Activated CD8-positive, alpha-beta T cell treated with anti-CD3 and anti-CD28 coated beads for 36 hours (primary cell): ENCODE measurements at regions of chr6 and their contacts with region 1.

Region 1: DNA sequence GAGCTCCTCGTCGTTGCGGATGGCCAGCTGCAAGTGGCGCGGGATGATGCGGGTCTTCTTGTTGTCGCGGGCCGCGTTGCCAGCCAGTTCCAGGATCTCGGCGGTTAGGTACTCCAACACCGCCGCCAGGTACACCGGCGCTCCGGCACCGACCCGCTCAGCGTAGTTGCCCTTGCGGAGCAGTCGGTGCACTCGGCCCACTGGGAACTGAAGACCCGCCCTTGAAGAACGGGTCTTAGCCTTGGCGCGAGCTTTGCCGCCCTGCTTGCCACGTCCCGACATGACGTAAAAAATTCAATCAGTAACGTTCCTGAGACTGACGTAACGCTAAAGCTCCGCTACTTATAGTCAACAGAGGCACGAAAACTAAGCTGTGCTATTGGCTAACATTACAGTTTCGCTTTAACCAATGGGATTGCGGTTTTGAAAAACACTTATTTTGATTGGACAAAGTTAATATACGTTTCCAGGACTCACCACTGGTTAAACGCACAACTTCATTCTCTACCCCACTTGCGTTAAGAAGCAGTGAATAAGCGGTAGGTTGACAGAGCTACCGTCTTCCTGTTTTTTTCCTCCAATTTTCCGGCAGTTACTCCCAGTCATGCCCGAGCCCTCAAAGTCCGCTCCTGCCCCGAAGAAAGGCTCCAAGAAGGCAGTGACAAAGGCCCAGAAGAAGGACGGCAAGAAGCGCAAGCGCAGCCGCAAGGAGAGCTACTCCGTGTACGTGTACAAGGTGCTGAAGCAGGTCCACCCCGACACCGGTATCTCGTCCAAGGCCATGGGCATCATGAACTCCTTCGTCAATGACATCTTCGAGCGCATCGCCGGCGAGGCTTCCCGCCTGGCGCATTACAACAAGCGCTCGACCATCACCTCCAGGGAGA is 73.9 kb downstream of the OR2B2 start:
- DNase-seq: peak; percentile 87
- ATAC-seq: peak; percentile 73
- H3K4me3 Mint-ChIP-seq: no peak overlapping the region
- H3K27ac Mint-ChIP-seq: no peak overlapping the region
- H3K4me1 Mint-ChIP-seq: peaks cover 20% of the 10 kb centered on the region
- H3K27me3 Mint-ChIP-seq: no peaks in the 10 kb centered on the region
- CTCF ChIP-seq: no peak

Region 2: GRCh38 chr6:27742833-27743573 is 95.3 kb before region 1 on chr6:
- CTCF ChIA-PET with region 1: no interaction called
- POLR2A ChIA-PET with region 1: no interaction called
- intact Hi-C with region 1: no loop called
- DNase-seq: no peak
- ATAC-seq: no peak
- H3K4me3 Mint-ChIP-seq: no peak overlapping the region
- H3K27ac Mint-ChIP-seq: no peak overlapping the region
- H3K4me1 Mint-ChIP-seq: peaks cover 7% of the 10 kb centered on the region
- H3K27me3 Mint-ChIP-seq: peaks cover 23% of the 10 kb centered on the region
- CTCF ChIP-seq: no peak

Region 3: DNA sequence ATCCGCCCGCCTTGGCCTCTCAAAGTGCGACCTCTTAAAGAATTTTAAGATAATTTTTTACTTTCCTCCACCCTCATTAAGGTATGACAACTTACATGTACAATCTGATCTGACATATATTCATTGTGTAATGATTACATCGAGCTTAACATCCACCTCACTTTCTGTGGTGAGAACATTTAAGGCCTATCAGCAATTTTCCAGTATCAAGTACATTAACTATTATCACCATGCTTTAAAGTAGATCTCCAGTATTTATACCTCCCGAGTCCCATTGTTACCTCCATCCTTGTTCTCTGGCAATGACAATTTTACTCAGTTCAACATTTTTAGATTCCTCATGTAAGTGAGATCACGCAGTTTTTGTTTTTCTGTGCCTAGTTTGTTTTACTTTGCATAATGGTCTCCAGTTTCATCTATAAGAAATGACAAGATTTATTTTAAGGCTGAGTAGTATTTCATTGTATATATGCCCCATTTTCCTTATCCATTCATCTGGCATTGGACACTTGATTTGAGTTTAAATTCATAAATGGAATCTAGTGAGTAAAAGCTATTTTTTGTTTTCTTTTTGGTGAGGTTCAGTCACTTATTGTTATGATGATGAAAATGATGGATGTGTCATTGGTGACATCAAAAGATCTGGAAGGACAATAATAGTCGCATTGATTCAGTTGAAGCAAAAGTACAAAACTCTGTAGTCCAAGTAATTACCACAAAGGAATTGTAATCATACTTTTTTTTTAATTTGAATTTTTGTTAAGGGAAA is 13.1 kb before region 1 on chr6:
- CTCF ChIA-PET with region 1: interaction called, 13 read pairs
- POLR2A ChIA-PET with region 1: interaction called, 214 read pairs
- intact Hi-C with region 1: no loop called
- DNase-seq: no peak
- ATAC-seq: peak; percentile 1
- H3K4me3 Mint-ChIP-seq: peak overlapping the region; percentile 91
- H3K27ac Mint-ChIP-seq: peak overlapping the region; percentile 99
- H3K4me1 Mint-ChIP-seq: peaks cover 25% of the 10 kb centered on the region
- H3K27me3 Mint-ChIP-seq: no peaks in the 10 kb centered on the region
- CTCF ChIP-seq: no peak

Region 4: GRCh38 chr6:27854421-27854820 is 16.1 kb after region 1 on chr6:
- CTCF ChIA-PET with region 1: interaction called, 3 read pairs
- POLR2A ChIA-PET with region 1: interaction called, 1,105 read pairs
- intact Hi-C with region 1: no loop called
- DNase-seq: no peak
- ATAC-seq: no peak
- H3K4me3 Mint-ChIP-seq: no peak overlapping the region
- H3K27ac Mint-ChIP-seq: no peak overlapping the region
- H3K4me1 Mint-ChIP-seq: no peaks in the 10 kb centered on the region
- H3K27me3 Mint-ChIP-seq: no peaks in the 10 kb centered on the region
- CTCF ChIP-seq: no peak

Region 5: GRCh38 chr6:27871924-27872638 is 33.8 kb after region 1 on chr6:
- CTCF ChIA-PET with region 1: interaction called, 39 read pairs
- POLR2A ChIA-PET with region 1: interaction called, 1,105 read pairs
- intact Hi-C with region 1: no loop called
- DNase-seq: peak; percentile 85
- ATAC-seq: peak; percentile 61
- H3K4me3 Mint-ChIP-seq: peak overlapping the region; percentile 93
- H3K27ac Mint-ChIP-seq: peak overlapping the region; percentile 99
- H3K4me1 Mint-ChIP-seq: peaks cover 26% of the 10 kb centered on the region
- H3K27me3 Mint-ChIP-seq: no peaks in the 10 kb centered on the region
- CTCF ChIP-seq: peak; percentile 27